ENCODE measurements at regions of chr3 and their contacts with region 1.

Region 1: GRCh38 chr3:31768479-31769123 is 212.5 kb downstream of the OSBPL10 start:
- DNase-seq: no peak
- ATAC-seq: peak; percentile 55 to 74
- H3K4me3 ChIP-seq: no peak overlapping the region
- H3K27ac ChIP-seq: no peak overlapping the region
- H3K4me1 ChIP-seq: no peaks in the 10 kb centered on the region
- H3K27me3 ChIP-seq: no peaks in the 10 kb centered on the region
- CTCF ChIP-seq: peak; percentile 66

Region 2: GRCh38 chr3:31575448-31575847 is 193.2 kb before region 1 on chr3:
- intact Hi-C with region 1: no loop called
- DNase-seq: no peak
- ATAC-seq: no peak
- H3K4me3 ChIP-seq: no peak overlapping the region
- H3K27ac ChIP-seq: no peak overlapping the region
- H3K4me1 ChIP-seq: peaks cover 24% of the 10 kb centered on the region
- H3K27me3 ChIP-seq: no peaks in the 10 kb centered on the region
- CTCF ChIP-seq: no peak

Region 3: DNA sequence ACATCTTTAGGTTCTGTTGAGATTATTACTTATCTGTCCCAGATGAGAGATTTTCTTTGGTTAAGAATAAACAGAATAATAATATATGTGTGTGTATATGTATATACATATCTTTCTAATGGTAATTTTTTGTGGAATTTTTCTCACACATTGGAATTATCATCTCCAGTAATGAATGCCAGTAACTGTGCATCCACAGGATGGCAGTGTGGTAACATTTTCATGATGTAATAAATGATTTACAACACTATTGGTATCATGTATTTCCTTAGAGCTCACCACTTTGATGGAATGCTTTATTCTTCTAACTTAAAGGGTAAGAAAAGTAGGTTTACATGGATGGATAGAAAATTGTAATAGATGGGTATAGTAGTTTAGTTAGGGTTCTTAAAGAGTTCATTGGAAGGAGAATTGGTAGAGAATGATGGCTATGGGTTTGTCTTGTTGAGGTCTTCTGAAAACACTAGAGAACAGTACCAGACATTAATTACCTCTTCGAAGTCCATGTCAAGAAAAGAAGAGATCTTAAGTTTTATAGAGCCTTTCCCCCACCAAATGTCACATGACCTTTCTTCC is 157.8 kb before region 1 on chr3:
- intact Hi-C with region 1: loop called (anchors 5 kb)
- DNase-seq: no peak
- ATAC-seq: peak; percentile 48 to 81
- H3K4me3 ChIP-seq: no peak overlapping the region
- H3K27ac ChIP-seq: no peak overlapping the region
- H3K4me1 ChIP-seq: peaks cover 13% of the 10 kb centered on the region
- H3K27me3 ChIP-seq: no peaks in the 10 kb centered on the region
- CTCF ChIP-seq: peak; percentile 64

Region 4: DNA sequence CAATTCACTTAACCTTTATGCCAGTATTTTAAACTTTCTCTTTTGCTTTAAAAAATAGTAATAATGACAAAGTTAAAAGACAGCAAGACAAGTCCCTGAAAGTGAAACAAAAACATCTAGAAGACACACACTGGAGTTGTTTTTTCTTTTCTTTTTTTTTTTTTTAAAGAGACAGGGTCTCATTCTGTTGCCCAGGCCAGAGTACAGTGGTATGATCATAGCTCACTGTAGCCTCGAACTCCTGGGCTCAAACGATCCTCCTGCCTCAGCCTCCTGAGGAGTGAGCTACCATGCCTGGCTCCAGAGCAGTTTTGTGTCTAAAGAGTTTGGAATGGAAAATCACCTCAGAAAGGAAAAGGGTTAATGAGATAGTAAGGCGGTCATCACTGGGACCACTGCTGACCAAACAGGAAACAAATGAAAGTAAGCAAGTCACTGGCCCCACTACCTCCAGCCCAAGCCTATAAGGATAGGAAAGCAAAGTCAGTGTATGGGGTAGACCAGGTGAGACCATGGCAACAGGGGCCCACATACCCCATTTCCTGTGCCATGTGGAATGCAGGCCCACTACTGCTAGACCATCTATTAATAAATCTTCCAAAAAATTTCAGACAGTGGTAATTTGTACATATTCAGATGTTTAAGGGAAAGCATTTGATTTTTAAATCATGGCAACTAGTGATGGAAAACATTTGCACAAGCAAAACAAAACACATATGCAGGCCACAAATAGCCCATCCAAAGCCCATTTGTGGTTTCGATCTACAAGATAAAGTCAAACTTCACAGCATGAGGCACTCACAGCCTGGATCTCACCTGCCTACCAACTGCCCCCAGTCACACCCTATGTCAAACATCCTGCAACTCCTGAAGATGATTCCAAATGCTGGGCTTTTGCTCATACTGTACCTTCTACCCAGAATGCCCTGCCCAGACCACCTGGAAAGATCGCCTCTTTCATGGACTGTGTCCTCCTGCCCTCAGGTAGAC is 149.9 kb after region 1 on chr3:
- intact Hi-C with region 1: no loop called
- DNase-seq: no peak
- ATAC-seq: peak in 1 of 2 donors; percentile 26
- H3K4me3 ChIP-seq: peak overlapping the region; percentile 22
- H3K27ac ChIP-seq: no peak overlapping the region
- H3K4me1 ChIP-seq: peaks cover 35% of the 10 kb centered on the region
- H3K27me3 ChIP-seq: no peaks in the 10 kb centered on the region
- CTCF ChIP-seq: no peak

Region 5: GRCh38 chr3:32502118-32502945 is 733.7 kb after region 1 on chr3 and contains the start of gene CMTM6:
- intact Hi-C with region 1: no loop called
- DNase-seq: peak; percentile 89
- ATAC-seq: peak; percentile 96 to 97
- H3K4me3 ChIP-seq: peak within 1 kb of the TSS; percentile 88
- H3K27ac ChIP-seq: peak within 1 kb of the TSS; percentile 98
- H3K4me1 ChIP-seq: peaks cover 21% of the 10 kb centered on the region
- H3K27me3 ChIP-seq: no peaks in the 10 kb centered on the region
- CTCF ChIP-seq: no peak
- total RNA-seq, gene CMTM6: 69.5 TPM